ENCODE measurements at regions of chr6 and their contacts with region 1.

Region 1: DNA sequence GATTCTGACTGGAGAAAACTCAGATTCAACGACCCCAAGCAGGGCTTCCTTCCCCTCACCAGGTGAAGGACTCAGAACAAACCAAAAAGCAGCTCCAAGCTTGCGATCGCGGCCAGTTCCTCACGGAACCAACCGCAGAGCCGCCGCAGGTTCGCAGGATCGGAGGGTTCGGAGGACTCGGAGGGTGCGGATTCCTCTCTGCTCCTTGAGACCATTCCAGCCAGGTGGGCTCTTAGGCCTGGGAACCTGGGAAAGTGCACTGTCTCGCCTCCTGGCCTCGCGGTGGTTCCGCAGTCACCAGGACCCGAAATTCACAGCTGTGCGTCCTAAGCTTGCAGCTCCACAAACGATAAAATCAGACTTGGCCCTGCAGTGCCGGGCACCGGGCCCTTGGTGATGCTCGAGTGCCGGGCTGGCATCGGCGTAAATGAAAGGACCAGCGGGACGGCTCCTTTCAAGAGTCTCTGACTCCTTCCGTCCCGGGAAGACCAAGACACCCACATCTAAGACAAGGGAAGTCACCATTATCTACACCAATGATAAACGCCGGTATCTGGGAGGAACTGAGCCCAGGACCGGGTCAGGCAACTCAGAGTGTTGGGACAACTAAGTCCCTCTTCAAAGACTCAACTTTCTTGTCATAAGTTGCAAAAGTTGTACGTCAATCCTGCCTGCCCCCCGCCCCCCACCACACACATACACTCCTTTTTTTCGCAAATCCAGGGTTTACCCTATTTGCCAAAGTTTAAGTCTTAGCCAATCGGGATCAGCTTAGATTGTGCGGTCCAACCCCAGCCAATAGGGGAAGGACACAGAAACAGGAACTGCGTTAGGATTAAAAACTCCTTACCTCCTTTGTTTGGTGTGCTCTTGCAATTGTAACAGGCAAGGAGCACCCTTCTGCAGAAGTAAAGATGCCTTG is 69.8 kb upstream of the PRSS16 start:
- DNase-seq: peak; percentile 64
- ATAC-seq: peak; percentile 82
- H3K4me3 Mint-ChIP-seq: peak overlapping the region; percentile 98
- H3K27ac Mint-ChIP-seq: peak overlapping the region; percentile 92
- H3K4me1 Mint-ChIP-seq: peaks cover 12% of the 10 kb centered on the region
- H3K27me3 Mint-ChIP-seq: peaks cover 5% of the 10 kb centered on the region
- CTCF ChIP-seq: no peak

Region 2: DNA sequence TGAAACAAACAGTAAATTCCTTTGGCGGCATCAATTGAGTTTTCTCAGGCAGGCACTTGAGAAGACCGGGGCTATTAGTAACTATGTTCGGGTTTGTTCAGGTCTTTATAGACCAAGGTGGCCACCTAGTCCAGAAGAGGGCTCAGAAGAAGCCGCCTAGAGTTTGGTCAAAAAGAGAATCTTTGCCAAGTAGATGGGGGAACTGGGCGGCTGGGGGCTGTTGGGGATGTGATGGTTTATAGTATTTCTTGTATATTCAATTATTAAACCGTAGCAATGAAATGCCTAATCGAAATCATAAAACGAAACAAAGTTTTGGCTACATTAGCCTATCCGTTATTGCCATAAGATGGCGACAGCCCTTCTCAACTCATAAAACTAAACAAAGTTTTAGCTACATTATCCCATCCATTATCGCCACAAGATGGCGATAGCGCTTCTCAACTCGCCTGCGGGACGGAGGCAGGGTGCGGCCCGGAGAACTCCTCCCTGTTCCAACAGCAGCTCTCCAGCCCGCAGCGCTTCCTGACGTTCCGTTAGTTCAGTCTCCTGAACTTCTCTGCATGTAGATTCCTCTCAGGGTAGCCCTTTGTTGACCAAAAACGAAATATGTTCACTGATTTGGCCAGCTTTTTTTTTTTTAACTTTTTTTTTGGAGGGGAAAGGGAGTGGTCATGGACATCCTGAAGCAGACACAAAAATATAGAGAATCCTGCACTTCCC is 50.8 kb before region 1 on chr6:
- CTCF ChIA-PET with region 1: interaction called, 13 read pairs
- POLR2A ChIA-PET with region 1: interaction called, 48 read pairs
- intact Hi-C with region 1: loop called (anchors 1 kb)
- DNase-seq: peak; percentile 55
- ATAC-seq: peak; percentile 79
- H3K4me3 Mint-ChIP-seq: peak overlapping the region; percentile 81
- H3K27ac Mint-ChIP-seq: peak overlapping the region; percentile 82
- H3K4me1 Mint-ChIP-seq: peaks cover 14% of the 10 kb centered on the region
- H3K27me3 Mint-ChIP-seq: no peaks in the 10 kb centered on the region
- CTCF ChIP-seq: peak; percentile 54

Region 3: GRCh38 chr6:27188885-27189418 is 11.2 kb after region 1 on chr6:
- CTCF ChIA-PET with region 1: interaction called, 5 read pairs
- POLR2A ChIA-PET with region 1: interaction called, 27 read pairs
- intact Hi-C with region 1: loop called (anchors 1 kb)
- DNase-seq: no peak
- ATAC-seq: peak; percentile 80
- H3K4me3 Mint-ChIP-seq: peak overlapping the region; percentile 83
- H3K27ac Mint-ChIP-seq: peak overlapping the region; percentile 19
- H3K4me1 Mint-ChIP-seq: peaks cover 8% of the 10 kb centered on the region
- H3K27me3 Mint-ChIP-seq: peaks cover 2% of the 10 kb centered on the region
- CTCF ChIP-seq: no peak

Region 4: GRCh38 chr6:27205375-27206278 is 27.9 kb after region 1 on chr6:
- CTCF ChIA-PET with region 1: no interaction called
- POLR2A ChIA-PET with region 1: no interaction called
- intact Hi-C with region 1: no loop called
- DNase-seq: no peak
- ATAC-seq: no peak
- H3K4me3 Mint-ChIP-seq: no peak overlapping the region
- H3K27ac Mint-ChIP-seq: no peak overlapping the region
- H3K4me1 Mint-ChIP-seq: peaks cover 15% of the 10 kb centered on the region
- H3K27me3 Mint-ChIP-seq: peaks cover 38% of the 10 kb centered on the region
- CTCF ChIP-seq: no peak

Region 5: GRCh38 chr6:27479319-27480182 is 301.8 kb after region 1 on chr6:
- CTCF ChIA-PET with region 1: no interaction called
- POLR2A ChIA-PET with region 1: interaction called, 16 read pairs
- intact Hi-C with region 1: loop called (anchors 1 kb)
- DNase-seq: peak; percentile 84
- ATAC-seq: peak; percentile 76
- H3K4me3 Mint-ChIP-seq: no peak overlapping the region
- H3K27ac Mint-ChIP-seq: no peak overlapping the region
- H3K4me1 Mint-ChIP-seq: peaks cover 9% of the 10 kb centered on the region
- H3K27me3 Mint-ChIP-seq: no peaks in the 10 kb centered on the region
- CTCF ChIP-seq: no peak

Region 6: DNA sequence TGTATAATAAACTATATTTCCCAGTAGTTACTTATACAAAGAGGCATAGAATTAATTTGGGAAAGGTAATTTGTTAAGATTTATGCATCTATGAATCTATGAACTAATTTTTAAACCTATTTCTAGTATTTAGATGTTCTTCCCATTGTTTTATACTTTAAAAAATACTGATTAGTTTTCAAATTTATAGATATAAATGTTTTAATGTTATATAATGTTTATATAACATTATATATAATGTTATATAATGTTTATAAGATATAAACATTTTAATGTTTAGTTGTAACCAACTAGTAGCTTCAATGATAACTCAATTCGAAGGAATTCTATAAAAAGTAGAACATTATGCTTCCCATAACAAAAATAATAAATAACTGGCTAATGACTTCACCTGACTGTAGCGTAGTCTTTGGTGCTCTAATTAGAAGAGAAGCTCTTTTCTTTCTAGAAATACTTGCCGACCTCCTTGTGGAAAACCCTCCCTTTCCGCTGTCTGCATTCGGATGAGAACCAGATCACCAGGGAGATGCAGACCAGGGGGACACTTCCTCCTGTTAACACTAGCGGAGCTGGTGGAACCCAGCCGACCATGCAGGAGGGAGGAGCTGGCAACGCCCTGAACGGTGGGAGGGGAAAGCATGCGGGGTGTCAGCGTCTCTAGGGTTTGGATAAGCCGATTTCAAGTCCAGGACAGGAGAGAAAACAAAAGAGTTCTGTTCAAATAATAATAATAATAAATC is 576.1 kb after region 1 on chr6:
- CTCF ChIA-PET with region 1: interaction called, 9 read pairs
- POLR2A ChIA-PET with region 1: interaction called, 6 read pairs
- intact Hi-C with region 1: loop called (anchors 1 kb)
- DNase-seq: peak; percentile 53
- ATAC-seq: peak; percentile 59
- H3K4me3 Mint-ChIP-seq: peak overlapping the region; percentile 96
- H3K27ac Mint-ChIP-seq: peak overlapping the region; percentile 97
- H3K4me1 Mint-ChIP-seq: peaks cover 32% of the 10 kb centered on the region
- H3K27me3 Mint-ChIP-seq: no peaks in the 10 kb centered on the region
- CTCF ChIP-seq: no peak

Region 7: DNA sequence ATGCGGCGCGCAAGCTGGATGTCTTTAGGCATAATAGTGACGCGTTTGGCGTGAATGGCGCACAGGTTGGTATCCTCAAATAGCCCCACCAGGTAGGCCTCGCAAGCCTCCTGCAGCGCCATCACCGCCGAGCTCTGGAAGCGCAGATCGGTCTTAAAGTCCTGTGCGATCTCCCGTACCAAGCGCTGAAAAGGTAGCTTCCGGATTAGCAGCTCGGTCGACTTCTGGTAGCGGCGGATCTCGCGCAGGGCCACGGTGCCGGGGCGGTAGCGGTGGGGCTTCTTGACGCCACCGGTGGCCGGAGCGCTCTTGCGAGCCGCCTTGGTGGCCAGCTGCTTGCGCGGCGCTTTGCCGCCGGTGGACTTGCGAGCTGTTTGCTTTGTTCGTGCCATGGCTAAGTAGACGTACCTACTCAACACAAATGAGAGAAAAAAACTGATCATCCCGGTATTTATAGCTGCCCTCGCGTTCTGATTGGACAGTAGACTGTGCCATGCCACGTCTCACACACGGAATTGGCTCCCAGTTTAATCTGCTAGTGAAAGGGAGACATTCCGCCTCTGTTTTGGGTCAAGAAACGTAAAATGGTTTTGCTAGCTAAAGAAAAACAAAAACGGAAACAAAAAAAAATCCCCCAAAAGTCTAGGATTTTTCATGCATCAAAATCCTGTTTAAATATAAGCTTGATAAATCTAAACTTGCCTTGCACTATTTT is 694.3 kb after region 1 on chr6:
- CTCF ChIA-PET with region 1: no interaction called
- POLR2A ChIA-PET with region 1: interaction called, 12 read pairs
- intact Hi-C with region 1: no loop called
- DNase-seq: peak; percentile 73
- ATAC-seq: peak; percentile 80
- H3K4me3 Mint-ChIP-seq: peak overlapping the region; percentile 94
- H3K27ac Mint-ChIP-seq: peak overlapping the region; percentile 95
- H3K4me1 Mint-ChIP-seq: peaks cover 36% of the 10 kb centered on the region
- H3K27me3 Mint-ChIP-seq: no peaks in the 10 kb centered on the region
- CTCF ChIP-seq: no peak

Region 8: GRCh38 chr6:28940858-28941680 is 1763.3 kb after region 1 on chr6:
- CTCF ChIA-PET with region 1: no interaction called
- POLR2A ChIA-PET with region 1: interaction called, 3 read pairs
- intact Hi-C with region 1: loop called (anchors 2 kb)
- DNase-seq: peak; percentile 36
- ATAC-seq: peak; percentile 66
- H3K4me3 Mint-ChIP-seq: peak overlapping the region; percentile 95
- H3K27ac Mint-ChIP-seq: peak overlapping the region; percentile 88
- H3K4me1 Mint-ChIP-seq: peaks cover 47% of the 10 kb centered on the region
- H3K27me3 Mint-ChIP-seq: peaks cover 3% of the 10 kb centered on the region
- CTCF ChIP-seq: no peak

Measured in activated B cell treated with CpG ODN at 0.5 μM for 24 hours (primary cell).